ENCODE measurements at regions of chr14 and their contacts with region 1.

Region 1: DNA sequence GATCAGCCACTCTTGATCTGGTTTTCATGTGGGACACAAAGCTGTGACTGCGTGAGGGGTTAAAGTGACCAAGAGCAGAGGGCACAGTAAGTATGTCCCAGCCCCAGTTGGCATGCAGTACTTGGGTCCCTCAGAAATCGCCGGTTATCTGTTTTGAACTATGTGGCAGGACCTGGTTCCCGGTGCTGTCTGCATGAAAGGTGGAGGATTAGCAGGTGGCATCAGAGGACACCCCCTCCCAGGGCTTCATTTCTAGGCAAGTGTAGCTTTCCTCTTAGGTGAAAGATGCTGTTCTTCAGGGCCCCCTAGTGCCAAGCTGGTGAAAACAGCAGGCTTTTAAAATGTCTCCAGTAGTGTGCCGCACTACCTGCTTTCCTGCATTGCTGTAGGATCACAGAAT is 57.1 kb downstream of the ATG14 start:
- DNase-seq: peak in 3 of 4 experiments; percentile 13 to 56 (median 48)
- ATAC-seq: peak; percentile 93
- H3K4me3 ChIP-seq: no peak overlapping the region
- H3K27ac ChIP-seq: no peak overlapping the region
- H3K4me1 ChIP-seq: no peaks in the 10 kb centered on the region
- H3K27me3 ChIP-seq: no peaks in the 10 kb centered on the region
- CTCF ChIP-seq: peak; percentile 63 to 77 (median 64)
- EP300 ChIP-seq: no peak
- POLR2A ChIP-seq: no peak
- RAD21 ChIP-seq: peak; percentile 27 to 62; a peak in 3 of 4 replicates

Region 2: DNA sequence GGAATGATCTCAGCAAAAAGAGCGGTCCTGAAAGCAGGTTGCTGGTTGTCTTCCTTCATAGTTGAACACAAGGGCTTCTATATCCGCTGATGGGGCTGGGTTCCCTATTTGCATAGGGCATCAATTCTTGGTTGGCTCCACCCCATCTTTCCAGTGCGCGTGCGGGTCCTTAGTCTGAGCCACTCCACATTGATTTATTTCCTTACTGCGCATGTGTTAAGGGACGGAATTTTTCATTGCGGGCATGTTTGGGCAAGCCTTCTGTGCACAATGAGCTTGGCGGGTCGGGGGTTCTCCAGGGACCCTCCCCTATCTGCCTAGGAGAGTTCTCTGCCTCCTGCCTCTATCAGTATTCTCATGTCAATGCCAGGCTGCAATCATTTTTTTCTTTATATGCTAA is 141.9 kb before region 1 on chr14:
- CTCF ChIA-PET with region 1: no interaction called
- POLR2A ChIA-PET with region 1: no interaction called
- in situ Hi-C with region 1: no loop called
- intact Hi-C with region 1: loop called (anchors 2 kb)
- DNase-seq: no peak
- ATAC-seq: no peak
- H3K4me3 ChIP-seq: no peak overlapping the region
- H3K27ac ChIP-seq: no peak overlapping the region
- H3K4me1 ChIP-seq: no peaks in the 10 kb centered on the region
- H3K27me3 ChIP-seq: no peaks in the 10 kb centered on the region
- CTCF ChIP-seq: no peak
- EP300 ChIP-seq: no peak
- POLR2A ChIP-seq: no peak
- RAD21 ChIP-seq: no peak

Measured in K562 (cell line).